ENCODE measurements at regions of chr17 and their contacts with region 1.

Region 1: GRCh38 chr17:81837641-81838040 is 2.8 kb upstream of the PPP1R27 start:
- DNase-seq: no peak

Region 2: DNA sequence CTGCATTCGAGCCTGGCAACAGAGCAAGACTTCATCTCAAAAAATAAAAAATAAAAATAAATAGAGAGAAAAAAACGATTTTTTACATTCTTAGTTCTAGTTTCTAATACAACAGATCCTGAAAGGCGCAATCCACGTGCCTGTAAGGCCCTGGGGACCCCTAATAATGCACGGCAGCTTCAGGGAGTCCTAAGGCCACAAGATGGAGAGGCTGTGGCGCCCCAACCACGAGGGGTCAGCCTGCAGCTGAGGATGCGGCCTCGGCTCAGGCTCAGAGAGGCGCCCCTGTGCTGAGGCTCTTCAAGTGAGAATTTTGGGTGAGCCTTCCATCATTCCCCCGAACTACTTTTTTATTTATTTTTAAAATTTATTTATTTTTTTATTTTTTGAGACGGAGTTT is 11.8 kb after region 1 on chr17:
- intact Hi-C with region 1: no loop called
- DNase-seq: no peak

Region 3: DNA sequence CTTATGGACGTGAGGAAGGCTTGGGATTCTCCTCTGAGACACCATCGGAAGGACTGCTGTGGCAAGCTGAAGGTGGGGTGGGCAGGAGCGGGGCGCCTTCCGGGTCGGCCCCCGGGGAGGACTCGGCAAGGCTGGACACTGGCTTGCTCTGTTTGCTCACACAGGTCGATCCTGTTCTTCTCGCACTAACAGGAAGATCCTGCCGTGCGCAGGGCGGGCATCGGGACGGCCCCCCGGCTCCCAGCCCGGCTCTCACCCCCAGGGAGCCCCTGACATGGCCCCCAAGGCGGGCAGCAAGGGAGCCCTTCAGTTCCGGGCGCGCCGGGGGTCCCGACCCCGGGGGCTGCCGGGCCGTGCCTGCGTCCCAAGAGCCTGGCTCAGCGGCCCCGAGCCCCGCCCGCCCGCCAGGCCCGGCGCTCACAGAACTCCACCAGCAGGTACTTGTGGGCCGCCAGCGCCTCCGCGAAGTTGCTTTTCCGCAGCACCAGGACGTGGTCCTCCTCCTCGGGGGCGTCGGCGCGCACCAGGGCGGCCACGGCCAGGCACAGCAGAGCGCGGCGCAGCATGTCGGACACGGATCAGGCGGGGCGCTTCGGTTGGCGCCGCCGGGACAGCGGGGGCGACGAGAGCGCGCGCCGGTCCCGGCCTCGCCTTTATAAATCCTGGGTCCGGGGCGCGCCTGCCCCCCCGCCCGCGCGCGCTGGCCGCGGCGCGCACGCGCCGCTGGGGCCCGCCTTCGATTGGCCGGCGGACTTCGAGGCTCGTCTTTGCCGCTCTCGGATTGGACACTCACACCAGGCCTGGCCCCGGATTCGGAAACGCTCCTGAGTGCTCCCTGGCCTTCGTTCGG is 22.5 kb after region 1 on chr17 and contains the start of gene P4HB:
- intact Hi-C with region 1: loop called (anchors 2 kb)
- DNase-seq: peak in 1 of 42 donors; percentile 14

Region 4: GRCh38 chr17:81884520-81884919 is 46.9 kb after region 1 on chr17:
- intact Hi-C with region 1: no loop called
- DNase-seq: no peak

Measured in head of caudate nucleus (tissue), 42 donors.